Gastrocnemius medialis (tissue), 4 donors: ENCODE measurements at regions of chrX and their contacts with region 1.

Region 1: GRCh38 chrX:43741843-43742573 is 85.9 kb downstream of the MAOA start:
- DNase-seq: peak; percentile 4 to 76
- ATAC-seq: peak; percentile 80 to 97
- H3K4me3 ChIP-seq: no peak overlapping the region
- H3K27ac ChIP-seq: peak overlapping the region; percentile 45 to 85 (median 64)
- H3K4me1 ChIP-seq: peaks cover 0 to 10% of the 10 kb centered on the region in 2 donors
- H3K27me3 ChIP-seq: no peaks in the 10 kb centered on the region
- CTCF ChIP-seq: no peak
- POLR2A ChIP-seq: no peak

Region 2: DNA sequence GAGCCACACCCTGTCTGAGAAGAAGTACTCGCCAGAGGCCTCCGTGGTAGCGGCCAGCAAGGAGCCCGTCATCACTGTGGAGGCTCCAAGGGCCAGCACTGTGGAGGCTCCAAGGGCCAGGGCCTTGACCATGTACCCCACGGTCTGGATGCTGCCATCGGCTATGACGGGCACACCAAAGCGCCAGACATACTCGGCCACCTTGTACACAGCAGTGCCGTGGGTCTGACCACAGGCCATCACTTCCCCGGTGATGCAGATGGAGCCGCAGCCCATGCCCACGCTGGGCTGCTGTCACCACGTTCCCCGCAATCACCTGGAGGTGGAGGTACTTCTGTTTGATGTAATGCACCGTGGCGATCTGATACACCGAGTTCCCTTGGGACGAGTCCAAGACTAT is 463.6 kb before region 1 on chrX:
- in situ Hi-C with region 1: no loop called
- intact Hi-C with region 1: no loop called
- DNase-seq: no peak
- ATAC-seq: no peak
- H3K4me3 ChIP-seq: no peak overlapping the region
- H3K27ac ChIP-seq: no peak overlapping the region
- H3K4me1 ChIP-seq: no peaks in the 10 kb centered on the region
- H3K27me3 ChIP-seq: no peaks in the 10 kb centered on the region
- CTCF ChIP-seq: no peak
- POLR2A ChIP-seq: no peak

Region 3: GRCh38 chrX:43557792-43558191 is 184.2 kb before region 1 on chrX:
- in situ Hi-C with region 1: loop called in 1 of 4 experiments (anchors 5 kb)
- intact Hi-C with region 1: no loop called
- DNase-seq: peak in 1 of 2 donors; percentile 15
- ATAC-seq: no peak
- H3K4me3 ChIP-seq: no peak overlapping the region
- H3K27ac ChIP-seq: no peak overlapping the region
- H3K4me1 ChIP-seq: no peaks in the 10 kb centered on the region
- H3K27me3 ChIP-seq: no peaks in the 10 kb centered on the region
- CTCF ChIP-seq: peak in 4 of 5 experiments; percentile 34 to 53 (median 36)
- POLR2A ChIP-seq: no peak

Region 4: DNA sequence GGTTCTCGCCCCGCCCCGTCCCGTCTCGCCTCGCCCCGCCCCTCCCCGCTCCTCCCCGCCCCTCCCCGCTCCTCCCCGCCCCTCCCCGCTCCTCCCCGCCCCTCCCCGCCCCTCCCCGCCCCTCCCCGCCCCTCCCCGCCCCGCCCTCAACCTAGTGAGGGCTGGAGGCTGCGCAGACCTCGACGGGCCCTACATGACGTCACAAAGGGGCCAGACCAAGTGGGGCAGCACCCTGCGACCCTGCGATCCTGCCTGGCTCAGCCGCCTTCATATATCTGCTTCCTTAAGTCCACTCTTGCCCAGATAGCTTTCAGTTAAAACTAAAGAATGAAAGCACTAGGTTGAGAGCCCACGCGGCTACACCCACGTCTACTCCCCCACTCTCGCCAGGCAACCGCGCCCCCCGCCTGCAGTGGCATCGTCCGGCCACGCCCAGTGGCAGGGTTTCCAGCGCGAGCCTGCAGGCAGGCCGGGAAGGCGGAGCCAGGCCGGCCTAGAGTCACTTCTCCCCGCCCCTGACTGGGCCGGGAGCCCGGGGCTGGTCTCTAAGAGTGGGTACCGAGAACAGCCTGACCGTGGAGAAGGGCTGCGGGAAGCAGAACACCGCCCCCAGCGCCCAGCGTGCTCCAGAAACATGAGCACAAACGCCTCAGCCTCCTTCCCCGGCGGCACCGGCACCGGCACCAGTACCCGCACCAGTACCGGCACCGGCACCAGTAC is 87.4 kb before region 1 on chrX:
- in situ Hi-C with region 1: no loop called
- intact Hi-C with region 1: loop called (anchors 5 kb)
- DNase-seq: peak; percentile 77 to 94
- ATAC-seq: peak; percentile 80 to 89
- H3K4me3 ChIP-seq: peak overlapping the region; percentile 67 to 77 (median 72)
- H3K27ac ChIP-seq: peak overlapping the region; percentile 76 to 96 (median 88)
- H3K4me1 ChIP-seq: no peaks in the 10 kb centered on the region
- H3K27me3 ChIP-seq: no peaks in the 10 kb centered on the region
- CTCF ChIP-seq: peak in 3 of 5 experiments; percentile 23 to 34 (median 30)
- POLR2A ChIP-seq: peak; percentile 71 to 92

Region 5: DNA sequence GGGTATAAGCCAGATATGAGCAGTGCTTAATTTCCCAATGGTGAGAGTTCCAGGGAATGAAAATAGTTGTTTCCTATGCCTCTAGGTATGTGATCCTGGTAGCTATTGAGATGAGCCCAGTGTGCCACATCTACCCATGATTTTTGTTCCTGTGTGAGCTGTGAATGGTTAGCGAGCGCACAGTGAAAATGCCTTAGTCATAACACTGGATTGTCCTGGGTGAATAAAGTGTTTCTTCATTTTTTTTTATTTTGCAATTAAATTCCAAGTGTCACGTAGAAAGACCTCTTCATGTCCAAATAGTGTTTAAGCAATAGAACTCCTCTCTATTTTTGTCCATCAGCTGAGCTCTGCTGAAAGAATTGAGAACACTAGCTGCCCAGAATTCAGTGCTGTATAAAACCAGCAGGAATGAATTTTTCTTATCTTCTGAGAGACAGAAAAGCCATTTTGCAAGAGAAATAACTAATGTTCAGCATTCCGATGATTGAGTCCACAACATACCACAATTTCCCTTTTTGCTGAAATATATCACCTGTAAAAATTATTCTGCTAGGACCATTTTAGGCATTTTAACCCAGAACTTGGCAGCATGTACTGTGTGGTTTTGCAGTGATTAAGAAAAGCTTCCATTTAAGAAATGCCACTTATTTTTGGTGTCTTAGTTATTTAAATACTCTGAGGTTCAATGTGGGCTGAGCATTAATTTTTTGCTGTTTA is 80.3 kb before region 1 on chrX:
- in situ Hi-C with region 1: loop called in 2 of 4 experiments (anchors 10 kb)
- intact Hi-C with region 1: loop called (anchors 5 kb)
- DNase-seq: peak in 1 of 2 donors; percentile 55
- ATAC-seq: peak; percentile 63 to 95
- H3K4me3 ChIP-seq: peak overlapping the region in 2 of 4 donors; percentile 22 to 38
- H3K27ac ChIP-seq: peak overlapping the region; percentile 39 to 96 (median 66)
- H3K4me1 ChIP-seq: no peaks in the 10 kb centered on the region
- H3K27me3 ChIP-seq: no peaks in the 10 kb centered on the region
- CTCF ChIP-seq: no peak
- POLR2A ChIP-seq: peak in 1 of 2 donors; percentile 5

Region 6: GRCh38 chrX:43707812-43708548 is 34.0 kb before region 1 on chrX:
- in situ Hi-C with region 1: no loop called
- intact Hi-C with region 1: loop called (anchors 5 kb)
- DNase-seq: peak; percentile 53 to 68
- ATAC-seq: peak; percentile 80 to 89
- H3K4me3 ChIP-seq: no peak overlapping the region
- H3K27ac ChIP-seq: peak overlapping the region; percentile 62 to 80 (median 74)
- H3K4me1 ChIP-seq: peaks cover 10 to 11% of the 10 kb centered on the region in 2 donors
- H3K27me3 ChIP-seq: peaks cover 0 to 3% (median 0%) of the 10 kb centered on the region in 3 donors
- CTCF ChIP-seq: no peak
- POLR2A ChIP-seq: no peak

Region 7: DNA sequence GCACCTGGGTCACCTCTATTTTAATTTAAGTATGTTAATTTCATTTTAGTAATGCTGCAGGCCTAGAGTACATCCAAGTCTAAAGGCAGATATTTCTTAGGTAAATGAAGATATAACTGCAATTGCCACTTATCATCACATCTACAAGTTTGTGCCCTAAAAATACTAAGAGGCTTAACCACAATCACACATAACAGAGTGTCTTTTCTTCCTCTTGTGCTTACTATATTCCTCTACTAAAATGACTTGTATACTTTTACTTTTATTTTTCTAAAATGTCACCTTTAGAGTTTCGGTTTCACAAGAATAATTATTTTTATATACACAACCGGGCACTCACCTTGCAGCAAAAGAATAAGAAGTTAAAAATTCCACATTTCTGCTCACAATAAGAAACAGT is 523.6 kb after region 1 on chrX:
- in situ Hi-C with region 1: no loop called
- intact Hi-C with region 1: no loop called
- DNase-seq: no peak
- ATAC-seq: no peak
- H3K4me3 ChIP-seq: no peak overlapping the region
- H3K27ac ChIP-seq: no peak overlapping the region
- H3K4me1 ChIP-seq: no peaks in the 10 kb centered on the region
- H3K27me3 ChIP-seq: no peaks in the 10 kb centered on the region
- CTCF ChIP-seq: no peak
- POLR2A ChIP-seq: no peak